T-cell (primary cell): ENCODE measurements at regions of chr17 and their contacts with region 1.

Region 1: GRCh38 chr17:81967533-81968395 is 6.8 kb upstream of the NOTUM start:
- DNase-seq: peak; percentile 75 to 91 (median 83)
- ATAC-seq: peak; percentile 97 to 99 (median 98)
- H3K4me3 ChIP-seq: peak overlapping the region; percentile 49 to 54
- H3K4me3 Mint-ChIP-seq: peak overlapping the region; percentile 61 to 71 (median 65)
- H3K27ac ChIP-seq: peak overlapping the region; percentile 29
- H3K27ac Mint-ChIP-seq: peak overlapping the region; percentile 80 to 81
- H3K4me1 ChIP-seq: peaks cover 12 to 47% of the 10 kb centered on the region in 2 experiments
- H3K4me1 Mint-ChIP-seq: peaks cover 18 to 26% (median 24%) of the 10 kb centered on the region in 3 donors
- H3K27me3 ChIP-seq: peaks cover 0 to 27% of the 10 kb centered on the region in 2 experiments
- H3K27me3 Mint-ChIP-seq: peaks cover 0 to 15% of the 10 kb centered on the region in 2 donors

Region 2: DNA sequence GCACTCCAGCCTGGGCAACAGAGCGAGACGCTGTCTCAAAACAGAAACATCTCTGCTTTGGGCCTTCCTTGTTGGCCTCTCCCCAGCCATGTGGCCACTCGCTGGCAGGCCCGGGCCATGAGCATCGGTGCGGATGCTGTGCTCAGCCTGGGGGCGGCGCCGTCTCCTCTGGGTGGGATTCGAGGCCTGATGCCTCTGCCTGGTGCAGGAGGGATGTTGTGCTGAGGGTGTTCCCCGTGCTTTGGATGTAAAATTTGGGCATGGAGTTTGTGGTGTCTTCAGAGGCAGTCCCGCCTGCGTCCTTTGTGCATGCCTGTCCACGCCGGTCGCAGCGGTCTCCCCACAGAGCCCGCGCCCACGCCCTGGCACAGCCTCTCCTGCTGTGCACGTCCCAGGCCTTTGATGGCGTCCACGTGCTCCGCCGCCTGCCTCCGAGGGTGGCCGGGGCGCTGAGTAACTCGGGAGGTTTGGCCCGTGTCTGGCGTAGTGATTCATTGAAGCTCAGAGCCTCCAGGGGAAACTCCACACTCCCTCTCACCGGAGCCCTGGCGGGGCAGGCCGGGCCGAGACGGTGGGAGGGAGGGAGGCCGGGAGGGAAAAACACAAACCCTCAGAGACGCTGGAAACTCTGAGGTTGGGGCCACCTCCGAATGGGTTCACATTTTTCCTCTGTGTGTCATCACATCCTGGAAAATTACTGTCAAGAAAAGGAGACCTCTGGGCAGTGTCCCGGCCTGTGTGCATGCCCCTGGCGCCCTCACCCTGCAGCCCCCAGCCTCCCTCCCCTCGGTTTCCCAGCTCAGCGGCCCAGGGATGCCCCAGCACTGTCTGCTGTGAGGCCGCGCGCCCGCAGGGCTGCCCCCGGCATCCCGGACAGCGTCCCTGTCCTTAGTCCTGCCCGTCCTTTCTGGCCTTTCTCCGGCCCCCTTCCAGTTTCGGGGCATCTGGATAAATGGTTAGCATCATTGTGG is 35.9 kb after region 1 on chr17:
- CTCF ChIA-PET with region 1: no interaction called
- POLR2A ChIA-PET with region 1: no interaction called
- DNase-seq: no peak
- ATAC-seq: no peak
- H3K4me3 ChIP-seq: no peak overlapping the region
- H3K4me3 Mint-ChIP-seq: no peak overlapping the region
- H3K27ac ChIP-seq: no peak overlapping the region
- H3K27ac Mint-ChIP-seq: no peak overlapping the region
- H3K4me1 ChIP-seq: no peaks in the 10 kb centered on the region
- H3K4me1 Mint-ChIP-seq: no peaks in the 10 kb centered on the region
- H3K27me3 ChIP-seq: no peaks in the 10 kb centered on the region
- H3K27me3 Mint-ChIP-seq: no peaks in the 10 kb centered on the region

Region 3: GRCh38 chr17:82377924-82378623 is 410.3 kb after region 1 on chr17:
- CTCF ChIA-PET with region 1: no interaction called
- POLR2A ChIA-PET with region 1: interaction called in 1 of 2 experiments, 11 read pairs
- DNase-seq: no peak
- ATAC-seq: no peak
- H3K4me3 ChIP-seq: no peak overlapping the region
- H3K4me3 Mint-ChIP-seq: no peak overlapping the region
- H3K27ac ChIP-seq: no peak overlapping the region
- H3K27ac Mint-ChIP-seq: no peak overlapping the region
- H3K4me1 ChIP-seq: no peaks in the 10 kb centered on the region
- H3K4me1 Mint-ChIP-seq: peaks cover 2 to 11% (median 10%) of the 10 kb centered on the region in 3 donors
- H3K27me3 ChIP-seq: peaks cover 0 to 61% of the 10 kb centered on the region in 2 experiments
- H3K27me3 Mint-ChIP-seq: peaks cover 27 to 49% of the 10 kb centered on the region in 2 donors